ENCODE measurements at regions of chr2 and their contacts with region 1.

Region 1: DNA sequence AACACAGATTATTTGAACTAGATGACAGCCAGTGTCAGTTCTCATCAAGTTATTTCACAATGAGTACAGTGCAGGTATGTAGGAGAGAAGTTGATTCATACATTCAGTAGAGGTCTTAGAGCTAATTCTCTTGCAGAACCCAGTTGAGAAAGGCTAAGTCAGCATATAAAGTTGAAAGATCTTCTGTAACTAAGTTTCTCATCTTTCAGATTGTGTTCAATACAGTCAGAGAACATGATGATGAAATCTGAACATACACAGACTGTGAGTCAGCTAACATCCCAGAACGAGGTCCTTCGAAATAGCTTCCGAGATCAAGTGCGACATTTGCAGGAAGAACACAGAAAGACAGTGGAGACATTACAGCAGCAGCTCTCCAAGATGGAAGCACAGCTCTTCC is 41.9 kb upstream of the LIMS1 start:
- DNase-seq: no peak
- ATAC-seq: no peak
- H3K4me3 ChIP-seq: no peak overlapping the region
- H3K4me3 Mint-ChIP-seq: no peak overlapping the region
- H3K27ac ChIP-seq: no peak overlapping the region
- H3K27ac Mint-ChIP-seq: no peak overlapping the region
- H3K4me1 ChIP-seq: no peaks in the 10 kb centered on the region
- H3K4me1 Mint-ChIP-seq: peaks cover 0 to 8% (median 1%) of the 10 kb centered on the region in 3 donors
- H3K27me3 ChIP-seq: no peaks in the 10 kb centered on the region
- H3K27me3 Mint-ChIP-seq: no peaks in the 10 kb centered on the region

Region 2: DNA sequence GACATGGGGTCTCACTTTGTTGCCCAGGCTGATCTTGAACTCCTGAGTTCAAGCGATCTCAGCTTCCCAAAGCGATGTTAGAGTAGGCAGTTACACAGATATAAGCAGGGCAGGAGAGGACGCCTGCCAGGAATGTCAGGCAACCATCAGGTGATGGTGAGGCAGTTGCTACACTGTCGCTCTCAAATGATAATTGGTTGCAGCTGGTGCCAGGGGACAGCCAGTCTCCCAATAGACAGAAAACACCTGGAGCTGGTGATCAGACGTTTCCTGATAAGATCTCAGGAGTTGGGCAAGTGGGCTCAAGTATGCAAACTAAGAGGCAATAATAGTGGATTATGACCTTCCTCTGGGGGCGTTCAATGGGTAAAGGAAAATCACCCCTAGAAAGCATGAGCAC is 828.7 kb before region 1 on chr2:
- CTCF ChIA-PET with region 1: no interaction called
- POLR2A ChIA-PET with region 1: no interaction called
- DNase-seq: no peak
- ATAC-seq: no peak
- H3K4me3 ChIP-seq: no peak overlapping the region
- H3K4me3 Mint-ChIP-seq: no peak overlapping the region
- H3K27ac ChIP-seq: no peak overlapping the region
- H3K27ac Mint-ChIP-seq: no peak overlapping the region
- H3K4me1 ChIP-seq: no peaks in the 10 kb centered on the region
- H3K4me1 Mint-ChIP-seq: no peaks in the 10 kb centered on the region
- H3K27me3 ChIP-seq: no peaks in the 10 kb centered on the region
- H3K27me3 Mint-ChIP-seq: no peaks in the 10 kb centered on the region

Region 3: DNA sequence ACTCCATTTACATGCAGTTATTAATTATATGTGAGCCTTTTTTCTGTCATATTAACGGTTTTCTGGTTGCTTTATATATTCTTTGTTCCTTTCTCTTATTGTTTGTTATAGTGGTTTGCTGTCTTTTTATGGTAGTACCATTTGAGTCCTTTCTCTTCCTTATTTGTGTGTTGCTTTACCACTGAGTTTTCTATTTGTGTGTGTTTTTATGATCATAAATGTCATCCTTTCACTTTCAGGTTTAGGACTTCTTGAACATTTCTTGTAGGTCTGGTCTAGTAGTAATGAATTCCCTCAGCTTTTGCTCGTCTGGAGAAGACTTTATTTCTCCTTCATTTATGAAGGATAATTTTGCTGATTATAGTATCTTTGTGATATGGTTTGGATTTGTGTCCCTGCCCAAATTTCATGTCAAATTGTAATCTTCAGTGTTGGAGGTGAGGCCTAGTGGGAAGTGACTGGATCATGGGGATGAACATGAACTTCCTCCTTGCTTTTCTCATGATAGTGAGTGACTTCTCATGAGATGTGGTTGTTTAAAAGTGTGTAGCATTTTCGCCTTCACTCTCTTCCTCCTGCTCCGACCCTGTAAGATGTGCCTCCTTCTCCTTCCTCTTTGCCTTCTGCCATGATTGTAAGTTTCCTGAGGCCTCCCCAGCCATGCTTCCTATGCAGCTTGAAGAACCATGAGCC is 31.9 kb before region 1 on chr2:
- CTCF ChIA-PET with region 1: no interaction called
- POLR2A ChIA-PET with region 1: interaction called in 1 of 2 experiments, 10 read pairs
- DNase-seq: no peak
- ATAC-seq: no peak
- H3K4me3 ChIP-seq: no peak overlapping the region
- H3K4me3 Mint-ChIP-seq: peak overlapping the region in 1 of 3 donors; percentile 6
- H3K27ac ChIP-seq: no peak overlapping the region
- H3K27ac Mint-ChIP-seq: peak overlapping the region in 1 of 2 donors; percentile 54
- H3K4me1 ChIP-seq: peaks cover 0 to 14% of the 10 kb centered on the region in 2 experiments
- H3K4me1 Mint-ChIP-seq: peaks cover 66 to 77% (median 77%) of the 10 kb centered on the region in 3 donors
- H3K27me3 ChIP-seq: no peaks in the 10 kb centered on the region
- H3K27me3 Mint-ChIP-seq: no peaks in the 10 kb centered on the region

Region 4: DNA sequence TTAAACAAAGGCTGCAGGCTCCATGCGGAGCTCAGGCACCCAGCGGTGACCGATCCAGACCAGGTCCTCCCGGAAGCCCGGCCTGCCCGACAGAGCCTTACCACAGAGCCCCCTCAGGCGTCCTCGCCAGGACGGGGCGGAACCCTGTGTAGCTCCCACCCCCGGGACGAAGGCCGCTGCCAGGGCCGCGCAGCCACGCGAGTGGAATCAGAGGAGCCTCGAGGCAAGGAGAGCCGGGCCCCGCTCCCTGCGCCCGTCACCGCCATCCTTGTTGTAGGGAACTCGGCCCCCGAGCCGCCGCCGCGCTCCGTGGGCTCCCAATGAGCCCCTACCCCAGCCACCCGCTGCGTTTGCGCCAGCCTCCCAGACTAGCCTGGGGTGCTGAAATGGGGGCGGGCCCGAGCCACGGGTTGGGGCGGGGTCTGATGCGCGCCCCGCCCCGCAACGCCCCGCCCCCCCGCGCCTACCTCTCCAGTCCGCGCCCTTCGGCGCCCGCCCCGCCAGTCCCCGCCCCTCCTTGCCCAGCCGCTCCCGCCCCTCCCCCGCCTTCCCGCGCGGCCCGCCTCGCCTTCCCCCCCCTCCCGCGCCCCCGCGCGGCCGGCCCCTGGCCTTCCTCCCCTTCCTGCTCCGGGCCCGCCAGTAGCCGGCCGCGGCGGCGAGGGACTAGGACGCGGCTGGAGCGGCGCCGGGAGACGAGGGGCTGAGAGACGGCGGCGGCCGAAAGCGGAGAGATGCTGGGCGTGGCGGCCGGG is 41.6 kb after region 1 on chr2 and contains the start of gene LIMS1:
- CTCF ChIA-PET with region 1: no interaction called
- POLR2A ChIA-PET with region 1: no interaction called
- DNase-seq: peak; percentile 68 to 91 (median 82)
- ATAC-seq: peak; percentile 91 to 97 (median 94)
- H3K4me3 ChIP-seq: peak within 1 kb of the TSS; percentile 81 to 90
- H3K4me3 Mint-ChIP-seq: peak within 1 kb of the TSS; percentile 88 to 93 (median 92)
- H3K27ac ChIP-seq: peak within 1 kb of the TSS; percentile 29
- H3K27ac Mint-ChIP-seq: peak within 1 kb of the TSS; percentile 73 to 82
- H3K4me1 ChIP-seq: peaks cover 8 to 22% of the 10 kb centered on the region in 2 experiments
- H3K4me1 Mint-ChIP-seq: peaks cover 35 to 40% (median 35%) of the 10 kb centered on the region in 3 donors
- H3K27me3 ChIP-seq: no peaks in the 10 kb centered on the region
- H3K27me3 Mint-ChIP-seq: no peaks in the 10 kb centered on the region
- total RNA-seq, gene LIMS1: 55.5 to 82.8 (median 56.9) TPM